B cell (primary cell): ENCODE measurements at regions of chr1 and their contacts with region 1.

Region 1: DNA sequence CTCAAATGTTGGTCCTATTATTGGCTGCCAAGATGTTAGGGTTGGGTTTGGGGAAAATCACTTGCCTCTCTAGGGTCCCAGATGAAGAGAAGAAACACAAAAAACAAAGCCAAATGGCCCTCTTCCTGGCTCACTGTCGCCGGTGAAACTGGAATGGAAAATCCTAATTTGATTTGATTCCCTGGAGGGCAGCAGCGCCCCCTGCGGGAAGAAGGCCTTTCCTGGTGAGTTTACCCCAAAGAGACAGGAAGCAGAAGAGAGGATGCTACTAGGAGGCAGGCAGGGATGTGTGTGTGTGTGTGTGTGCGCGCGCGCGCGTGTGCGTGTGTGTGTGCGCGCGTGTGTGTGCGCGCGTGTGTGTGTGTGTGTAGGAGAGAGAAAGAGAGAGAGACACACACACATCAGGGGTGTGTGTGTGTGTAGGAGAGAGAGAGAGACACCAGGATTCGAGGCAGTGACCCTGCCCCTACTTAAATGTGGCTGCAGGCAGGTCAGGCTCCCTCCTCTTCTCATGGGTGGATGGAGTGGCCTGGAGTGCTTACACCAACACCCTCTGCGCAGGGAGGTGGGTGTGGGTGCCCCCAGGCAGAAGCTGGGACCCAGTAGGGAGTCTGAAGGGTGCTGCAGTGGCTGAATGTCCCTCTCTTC is 3.1 kb upstream of the SELENON start:
- DNase-seq: peak; percentile 66
- ATAC-seq: peak; percentile 21
- H3K4me3 ChIP-seq: no peak overlapping the region
- H3K4me3 Mint-ChIP-seq: peak overlapping the region; percentile 35
- H3K27ac ChIP-seq: no peak overlapping the region
- H3K27ac Mint-ChIP-seq: peak overlapping the region; percentile 13
- H3K4me1 ChIP-seq: peaks cover 7 to 21% of the 10 kb centered on the region in 2 donors
- H3K4me1 Mint-ChIP-seq: peaks cover 21% of the 10 kb centered on the region
- H3K27me3 ChIP-seq: peaks cover 0 to 4% (median 0%) of the 10 kb centered on the region in 4 experiments
- H3K27me3 Mint-ChIP-seq: no peaks in the 10 kb centered on the region
- CTCF ChIP-seq: peak; percentile 54

Region 2: GRCh38 chr1:25503551-25504426 is 293.1 kb before region 1 on chr1:
- CTCF ChIA-PET with region 1: interaction called, 4 read pairs
- POLR2A ChIA-PET with region 1: no interaction called
- intact Hi-C with region 1: loop called (anchors 5 kb)
- DNase-seq: peak; percentile 54
- ATAC-seq: peak; percentile 61
- H3K4me3 ChIP-seq: no peak overlapping the region
- H3K4me3 Mint-ChIP-seq: no peak overlapping the region
- H3K27ac ChIP-seq: no peak overlapping the region
- H3K27ac Mint-ChIP-seq: no peak overlapping the region
- H3K4me1 ChIP-seq: peaks cover 6 to 10% of the 10 kb centered on the region in 2 donors
- H3K4me1 Mint-ChIP-seq: peaks cover 10% of the 10 kb centered on the region
- H3K27me3 ChIP-seq: no peaks in the 10 kb centered on the region
- H3K27me3 Mint-ChIP-seq: peaks cover 3% of the 10 kb centered on the region
- CTCF ChIP-seq: peak; percentile 59

Region 3: DNA sequence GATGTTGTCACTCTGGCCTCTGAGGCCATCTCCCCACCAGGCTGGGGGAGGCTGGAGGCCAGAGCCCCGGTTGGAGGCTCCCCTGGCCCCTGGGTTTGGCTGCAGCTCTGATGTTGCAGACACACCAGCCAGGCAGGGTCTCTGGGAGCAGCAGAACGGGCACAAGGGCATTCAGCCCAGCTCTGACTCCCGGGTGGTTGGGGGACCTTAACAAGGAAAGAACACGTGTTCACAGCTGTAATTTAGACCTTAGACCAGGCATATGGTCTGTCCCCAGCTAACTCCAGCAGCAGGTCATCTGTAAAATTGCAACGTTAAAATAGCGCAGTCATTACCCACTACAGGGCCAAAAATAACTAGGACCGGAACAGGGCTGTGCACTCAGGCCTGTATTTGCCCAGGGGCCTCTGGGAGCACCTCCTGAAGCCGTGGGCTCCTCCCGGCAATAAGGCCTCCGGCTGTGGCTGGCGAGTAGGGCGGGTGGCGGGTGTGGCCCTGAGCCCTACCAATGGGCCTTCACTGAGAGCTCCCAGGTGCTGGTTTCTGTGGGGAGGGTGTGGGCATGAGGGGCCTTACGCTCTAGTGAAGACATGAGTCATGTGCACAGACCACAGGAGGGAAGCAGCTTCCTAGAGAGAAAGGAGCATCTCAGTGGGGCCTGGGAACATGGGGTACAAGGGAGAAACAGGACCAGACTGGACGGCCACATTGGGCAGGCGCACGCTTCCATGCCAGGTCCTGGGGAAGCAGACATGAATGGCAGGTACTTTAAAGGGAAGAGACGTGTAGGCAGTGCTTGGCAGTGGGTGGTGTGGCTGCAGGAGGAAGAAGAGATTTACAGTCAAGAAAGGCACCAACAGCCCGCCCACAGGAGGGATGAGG is 247.4 kb before region 1 on chr1:
- CTCF ChIA-PET with region 1: no interaction called
- POLR2A ChIA-PET with region 1: no interaction called
- intact Hi-C with region 1: loop called (anchors 5 kb)
- DNase-seq: peak; percentile 78
- ATAC-seq: peak; percentile 98
- H3K4me3 ChIP-seq: peak overlapping the region in 3 of 5 experiments; percentile 11 to 34 (median 34)
- H3K4me3 Mint-ChIP-seq: peak overlapping the region; percentile 79
- H3K27ac ChIP-seq: peak overlapping the region; percentile 42 to 70
- H3K27ac Mint-ChIP-seq: peak overlapping the region; percentile 92
- H3K4me1 ChIP-seq: peaks cover 36 to 48% of the 10 kb centered on the region in 2 donors
- H3K4me1 Mint-ChIP-seq: peaks cover 52% of the 10 kb centered on the region
- H3K27me3 ChIP-seq: peaks cover 0 to 6% (median under 1%) of the 10 kb centered on the region in 4 experiments
- H3K27me3 Mint-ChIP-seq: no peaks in the 10 kb centered on the region
- CTCF ChIP-seq: no peak

Region 4: DNA sequence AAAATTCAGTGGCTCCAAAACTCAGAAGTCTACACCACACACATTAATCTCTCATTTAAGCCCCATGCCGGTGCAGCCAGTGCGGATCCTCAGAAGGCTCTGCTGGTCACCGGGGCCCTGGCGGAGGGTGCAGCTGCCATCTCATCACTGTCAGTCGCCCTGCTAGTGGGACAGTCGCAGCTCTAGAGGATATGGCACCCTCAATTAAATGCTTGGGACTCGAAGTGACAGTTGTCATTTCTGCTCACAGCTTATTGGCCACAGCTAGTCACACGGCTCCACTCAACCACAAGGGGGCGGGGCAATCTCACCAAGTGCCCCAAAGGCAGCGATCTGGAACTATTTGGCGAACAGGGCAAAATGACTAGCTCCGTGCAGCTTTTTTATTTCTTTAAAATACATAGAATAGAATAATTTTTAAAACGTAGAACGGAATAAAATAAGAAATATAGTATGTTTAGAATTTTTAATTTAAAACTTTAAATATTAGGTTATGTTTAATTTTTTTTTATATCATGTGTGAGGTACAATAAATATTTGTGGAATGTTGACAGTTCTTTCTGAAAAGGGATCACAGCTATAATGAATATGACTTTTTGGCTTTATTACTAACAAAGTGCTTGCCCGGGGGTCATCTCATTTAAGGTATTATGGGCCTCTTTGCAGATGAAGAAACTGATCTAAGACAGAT is 188.3 kb before region 1 on chr1:
- CTCF ChIA-PET with region 1: interaction called, 13 read pairs
- POLR2A ChIA-PET with region 1: no interaction called
- intact Hi-C with region 1: no loop called
- DNase-seq: peak; percentile 86
- ATAC-seq: peak; percentile 100
- H3K4me3 ChIP-seq: peak overlapping the region in 1 of 5 experiments; percentile 39
- H3K4me3 Mint-ChIP-seq: peak overlapping the region; percentile 2
- H3K27ac ChIP-seq: no peak overlapping the region
- H3K27ac Mint-ChIP-seq: no peak overlapping the region
- H3K4me1 ChIP-seq: peaks cover 0 to 5% of the 10 kb centered on the region in 2 donors
- H3K4me1 Mint-ChIP-seq: peaks cover 8% of the 10 kb centered on the region
- H3K27me3 ChIP-seq: peaks cover 0 to 19% (median 11%) of the 10 kb centered on the region in 4 experiments
- H3K27me3 Mint-ChIP-seq: peaks cover 37% of the 10 kb centered on the region
- CTCF ChIP-seq: no peak

Region 5: GRCh38 chr1:25616095-25616986 is 180.6 kb before region 1 on chr1 and contains the start of gene MAN1C1:
- CTCF ChIA-PET with region 1: interaction called, 3 read pairs
- POLR2A ChIA-PET with region 1: no interaction called
- intact Hi-C with region 1: loop called (anchors 2 kb)
- DNase-seq: peak; percentile 88
- ATAC-seq: peak; percentile 92
- H3K4me3 ChIP-seq: peak within 1 kb of the TSS in 4 of 5 experiments; percentile 69 to 78 (median 74)
- H3K4me3 Mint-ChIP-seq: peak within 1 kb of the TSS; percentile 87
- H3K27ac ChIP-seq: no peak within 1 kb of the TSS
- H3K27ac Mint-ChIP-seq: peak within 1 kb of the TSS; percentile 69
- H3K4me1 ChIP-seq: peaks cover 8 to 22% of the 10 kb centered on the region in 2 donors
- H3K4me1 Mint-ChIP-seq: peaks cover 23% of the 10 kb centered on the region
- H3K27me3 ChIP-seq: peaks cover 0 to 45% (median 24%) of the 10 kb centered on the region in 4 experiments
- H3K27me3 Mint-ChIP-seq: peaks cover 43% of the 10 kb centered on the region
- CTCF ChIP-seq: peak; percentile 38
- total RNA-seq, gene MAN1C1: 0.70 and 0.89 TPM in 2 replicates

Region 6: DNA sequence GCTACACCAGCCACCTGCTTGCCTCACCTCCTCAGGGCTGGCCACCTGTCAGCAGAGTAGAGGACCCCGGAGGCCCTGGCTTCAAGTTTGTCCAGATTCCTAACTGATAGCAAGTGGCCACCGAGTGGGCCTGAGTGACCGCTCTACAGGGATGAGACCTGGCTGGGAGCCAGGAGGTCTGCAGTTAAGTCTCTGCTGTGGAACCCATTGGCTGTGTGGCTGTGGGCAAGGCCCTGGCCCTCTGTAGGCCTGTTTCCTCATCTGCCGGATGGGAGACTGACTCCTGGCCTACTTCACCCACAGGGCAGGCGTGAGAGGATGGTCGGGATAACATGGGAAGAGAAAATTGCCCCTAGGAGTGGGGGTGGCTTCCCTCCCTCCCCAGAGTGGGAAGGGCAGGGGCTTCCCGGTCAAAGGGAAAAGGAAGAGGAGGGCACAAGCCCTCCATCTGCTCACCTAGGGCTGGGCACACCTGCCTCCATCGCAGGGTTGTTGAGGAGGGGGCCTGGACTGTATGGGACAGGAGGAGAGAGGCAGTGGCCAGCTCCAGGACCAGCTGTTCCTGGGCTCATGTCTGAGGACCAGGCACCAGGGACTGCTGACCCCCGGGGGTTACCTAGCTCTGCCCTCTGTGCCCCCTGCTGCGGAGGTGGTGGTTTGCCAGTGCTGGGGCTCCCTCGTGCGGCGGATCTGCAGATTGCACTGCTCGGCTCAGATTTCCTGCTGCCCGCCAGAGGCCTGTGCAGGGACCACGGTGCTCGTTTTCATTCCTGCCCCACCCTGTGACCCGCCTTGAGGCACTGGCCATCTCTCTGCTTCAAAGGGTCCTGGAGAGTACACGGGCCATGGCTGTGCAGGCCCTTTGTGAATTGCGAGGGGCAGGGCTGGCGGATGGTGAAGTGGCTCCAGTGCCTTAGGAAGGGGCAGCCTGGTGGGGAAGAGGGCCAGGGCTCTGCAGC is 13.7 kb after region 1 on chr1:
- CTCF ChIA-PET with region 1: interaction called, 12 read pairs
- POLR2A ChIA-PET with region 1: interaction called, 3 read pairs
- intact Hi-C with region 1: no loop called
- DNase-seq: peak; percentile 84
- ATAC-seq: peak; percentile 89
- H3K4me3 ChIP-seq: no peak overlapping the region
- H3K4me3 Mint-ChIP-seq: no peak overlapping the region
- H3K27ac ChIP-seq: no peak overlapping the region
- H3K27ac Mint-ChIP-seq: no peak overlapping the region
- H3K4me1 ChIP-seq: peaks cover 11 to 23% of the 10 kb centered on the region in 2 donors
- H3K4me1 Mint-ChIP-seq: peaks cover 17% of the 10 kb centered on the region
- H3K27me3 ChIP-seq: no peaks in the 10 kb centered on the region
- H3K27me3 Mint-ChIP-seq: no peaks in the 10 kb centered on the region
- CTCF ChIP-seq: peak; percentile 96